Activated CD8-positive, alpha-beta T cell treated with anti-CD3 and anti-CD28 coated beads, Interleukin-2, amount 10 ng/mL, durations not matched to agents 7 days and 5 days (primary cell): ENCODE measurements at regions of chr14 and their contacts with region 1.

Region 1: GRCh38 chr14:23068476-23069412 is 11.4 kb upstream of the CDH24 start:
- DNase-seq: peak; percentile 88
- ATAC-seq: peak; percentile 75
- H3K4me3 Mint-ChIP-seq: peak overlapping the region; percentile 9
- H3K27ac Mint-ChIP-seq: peak overlapping the region; percentile 10
- H3K4me1 Mint-ChIP-seq: peaks cover 33% of the 10 kb centered on the region
- H3K27me3 Mint-ChIP-seq: no peaks in the 10 kb centered on the region

Region 2: DNA sequence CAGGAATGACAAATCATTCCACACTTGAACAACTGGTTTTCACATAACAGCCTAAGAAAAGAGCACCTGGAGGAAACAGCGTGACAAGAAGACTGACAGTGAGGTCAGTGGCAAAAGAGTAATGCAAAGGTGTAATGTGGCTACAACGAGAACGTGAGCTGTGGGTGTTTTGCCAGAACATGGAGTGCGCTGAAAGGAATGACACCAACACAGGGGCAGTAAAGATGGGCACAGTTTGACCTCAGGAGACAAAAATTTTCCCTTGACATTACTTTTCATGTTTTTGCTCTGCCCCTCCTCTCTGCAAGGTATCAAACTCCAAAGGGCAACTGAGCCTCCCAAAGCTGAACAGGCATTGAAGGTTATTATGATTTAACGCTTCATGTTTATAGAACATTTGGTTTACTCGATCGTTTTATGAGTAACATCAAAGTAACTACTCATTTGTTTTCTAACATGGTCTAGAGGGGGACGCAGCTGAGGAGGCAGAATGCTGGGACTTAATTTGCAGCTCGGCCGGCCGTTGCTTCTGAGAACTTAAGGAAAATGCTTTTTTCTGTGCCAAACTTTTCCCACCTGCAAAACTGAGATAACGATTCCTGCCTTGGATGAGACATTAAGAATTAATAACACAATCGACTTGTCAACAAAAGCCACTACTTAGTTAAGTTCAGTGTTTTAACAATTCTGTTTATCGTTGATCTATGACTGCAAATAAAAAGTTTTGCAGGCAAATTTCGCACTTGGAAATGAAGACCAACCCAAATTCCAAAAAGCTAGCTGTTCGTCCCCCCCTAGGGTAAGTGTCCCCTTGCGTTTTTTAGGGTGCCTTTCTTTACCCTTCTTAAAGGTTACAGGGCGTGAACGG is 112.8 kb before region 1 on chr14:
- CTCF ChIA-PET with region 1: interaction called, 18 read pairs
- POLR2A ChIA-PET with region 1: no interaction called
- DNase-seq: no peak
- ATAC-seq: no peak
- H3K4me3 Mint-ChIP-seq: peak overlapping the region; percentile 95
- H3K27ac Mint-ChIP-seq: peak overlapping the region; percentile 92
- H3K4me1 Mint-ChIP-seq: peaks cover 29% of the 10 kb centered on the region
- H3K27me3 Mint-ChIP-seq: no peaks in the 10 kb centered on the region

Region 3: GRCh38 chr14:22994762-22995275 is 73.9 kb before region 1 on chr14:
- CTCF ChIA-PET with region 1: interaction called, 489 read pairs
- POLR2A ChIA-PET with region 1: no interaction called
- DNase-seq: peak; percentile 56
- ATAC-seq: peak; percentile 83
- H3K4me3 Mint-ChIP-seq: no peak overlapping the region
- H3K27ac Mint-ChIP-seq: no peak overlapping the region
- H3K4me1 Mint-ChIP-seq: peaks cover 3% of the 10 kb centered on the region
- H3K27me3 Mint-ChIP-seq: no peaks in the 10 kb centered on the region

Region 4: GRCh38 chr14:23034483-23035302 is 34.1 kb before region 1 on chr14 and contains the start of gene PSMB5:
- CTCF ChIA-PET with region 1: interaction called, 13 read pairs
- POLR2A ChIA-PET with region 1: no interaction called
- DNase-seq: peak; percentile 95
- ATAC-seq: peak; percentile 97
- H3K4me3 Mint-ChIP-seq: peak within 1 kb of the TSS; percentile 91
- H3K27ac Mint-ChIP-seq: peak within 1 kb of the TSS; percentile 96
- H3K4me1 Mint-ChIP-seq: peaks cover 30% of the 10 kb centered on the region
- H3K27me3 Mint-ChIP-seq: no peaks in the 10 kb centered on the region
- total RNA-seq, gene PSMB5: 64.5 to 74.5 TPM

Region 5: DNA sequence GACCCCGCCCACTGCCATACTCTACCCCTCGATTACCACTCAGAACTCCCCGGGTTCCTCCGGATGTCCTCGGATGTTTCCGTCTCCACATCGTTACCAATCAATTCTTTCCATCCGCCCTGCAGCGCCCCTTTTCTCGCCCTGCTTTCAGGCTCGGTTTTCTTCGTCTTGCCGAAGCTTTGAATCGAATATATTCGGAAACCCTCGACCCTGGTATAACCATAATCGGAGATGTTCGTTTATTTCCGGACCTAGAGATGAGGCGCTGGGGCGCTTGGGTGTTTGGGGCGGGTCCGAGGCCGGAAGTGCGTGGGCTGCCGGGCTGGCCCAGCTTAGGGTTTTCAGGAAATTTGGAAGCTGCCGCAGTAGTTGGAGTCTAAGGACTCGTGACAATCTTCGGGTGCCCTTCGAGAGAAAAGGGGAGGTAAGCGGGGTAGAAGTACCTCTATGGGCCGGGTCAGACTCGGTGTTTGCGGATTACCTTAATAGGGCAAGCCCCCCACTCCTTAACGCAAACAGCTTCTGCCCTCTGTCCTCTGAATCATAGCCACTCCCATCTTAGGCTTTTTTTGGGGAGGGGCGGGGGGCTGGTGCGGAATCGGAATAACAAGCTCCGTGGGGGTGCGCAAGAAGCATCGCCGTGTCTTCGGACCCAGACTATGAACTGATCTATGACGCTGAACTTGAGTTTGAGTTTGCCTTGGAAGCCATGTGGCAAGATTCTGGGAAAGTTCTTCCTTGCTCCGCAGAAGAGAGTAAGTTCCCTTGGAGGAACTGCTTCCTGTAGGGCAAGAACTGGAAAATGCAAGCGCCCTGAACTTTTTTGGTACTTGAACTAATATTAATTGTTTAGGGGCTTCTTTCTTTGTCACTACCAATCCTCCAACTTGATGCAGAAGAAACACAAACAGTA is 26.7 kb after region 1 on chr14 and contains the start of gene C14orf119:
- CTCF ChIA-PET with region 1: interaction called, 66 read pairs
- POLR2A ChIA-PET with region 1: interaction called, 28 read pairs
- DNase-seq: peak; percentile 100
- ATAC-seq: peak; percentile 94
- H3K4me3 Mint-ChIP-seq: no peak within 1 kb of the TSS
- H3K27ac Mint-ChIP-seq: no peak within 1 kb of the TSS
- H3K4me1 Mint-ChIP-seq: peaks cover 33% of the 10 kb centered on the region
- H3K27me3 Mint-ChIP-seq: no peaks in the 10 kb centered on the region
- total RNA-seq, gene C14orf119: 46.0 to 47.0 TPM

Region 6: GRCh38 chr14:23174276-23175184 is 105.8 kb after region 1 on chr14:
- CTCF ChIA-PET with region 1: interaction called, 11 read pairs
- POLR2A ChIA-PET with region 1: no interaction called
- DNase-seq: no peak
- ATAC-seq: no peak
- H3K4me3 Mint-ChIP-seq: no peak overlapping the region
- H3K27ac Mint-ChIP-seq: no peak overlapping the region
- H3K4me1 Mint-ChIP-seq: peaks cover 4% of the 10 kb centered on the region
- H3K27me3 Mint-ChIP-seq: peaks cover 7% of the 10 kb centered on the region